Psoas muscle (tissue), 8 donors: ENCODE measurements at regions of chr16 and their contacts with region 1.

Region 1: DNA sequence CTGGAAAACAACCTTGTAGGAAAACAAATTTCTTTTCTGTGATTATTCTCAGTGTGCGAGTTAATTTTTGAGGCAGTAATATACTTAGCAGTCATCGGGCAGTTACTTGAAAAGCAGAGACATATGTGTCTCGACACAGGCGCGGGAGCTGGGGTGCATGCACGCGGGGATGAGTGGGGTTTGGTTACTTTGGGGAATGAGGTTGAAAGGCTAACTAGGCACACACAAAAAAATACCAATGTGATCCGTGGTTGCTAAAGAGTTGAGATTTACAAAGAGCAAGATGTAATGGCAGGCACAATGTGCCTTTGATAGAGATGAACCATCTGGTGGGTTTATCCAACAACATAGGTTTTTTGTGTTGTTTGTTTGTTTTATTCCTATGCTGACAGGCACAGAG is 703.8 kb upstream of the EEF2KMT start:
- DNase-seq: no peak
- ATAC-seq: no peak
- H3K4me3 ChIP-seq: no peak overlapping the region
- H3K27ac ChIP-seq: no peak overlapping the region
- H3K4me1 ChIP-seq: no peaks in the 10 kb centered on the region
- H3K27me3 ChIP-seq: peaks cover 0 to 2% (median 0%) of the 10 kb centered on the region in 3 donors
- CTCF ChIP-seq: no peak

Region 2: DNA sequence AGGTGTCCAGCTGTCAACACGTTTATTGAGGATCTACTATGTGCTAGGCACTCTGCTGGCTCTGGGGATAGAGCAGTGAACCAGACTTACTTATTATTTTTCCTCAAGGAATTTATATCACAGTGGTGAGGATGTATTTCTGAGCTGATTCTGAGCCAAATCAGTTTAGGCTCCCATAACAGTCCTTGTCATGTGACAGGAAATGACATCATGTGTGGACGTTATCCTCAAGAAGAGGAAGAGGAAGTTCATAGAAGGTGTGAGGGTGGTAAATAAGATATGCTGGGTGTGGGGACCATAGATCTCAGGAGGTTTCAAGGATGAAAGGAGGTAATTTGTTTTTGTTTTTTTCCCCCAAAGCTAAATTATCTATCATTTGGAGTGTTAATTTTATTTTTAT is 169.7 kb after region 1 on chr16:
- intact Hi-C with region 1: no loop called
- DNase-seq: no peak
- ATAC-seq: no peak
- H3K4me3 ChIP-seq: no peak overlapping the region
- H3K27ac ChIP-seq: no peak overlapping the region
- H3K4me1 ChIP-seq: no peaks in the 10 kb centered on the region
- H3K27me3 ChIP-seq: no peaks in the 10 kb centered on the region
- CTCF ChIP-seq: no peak

Region 3: DNA sequence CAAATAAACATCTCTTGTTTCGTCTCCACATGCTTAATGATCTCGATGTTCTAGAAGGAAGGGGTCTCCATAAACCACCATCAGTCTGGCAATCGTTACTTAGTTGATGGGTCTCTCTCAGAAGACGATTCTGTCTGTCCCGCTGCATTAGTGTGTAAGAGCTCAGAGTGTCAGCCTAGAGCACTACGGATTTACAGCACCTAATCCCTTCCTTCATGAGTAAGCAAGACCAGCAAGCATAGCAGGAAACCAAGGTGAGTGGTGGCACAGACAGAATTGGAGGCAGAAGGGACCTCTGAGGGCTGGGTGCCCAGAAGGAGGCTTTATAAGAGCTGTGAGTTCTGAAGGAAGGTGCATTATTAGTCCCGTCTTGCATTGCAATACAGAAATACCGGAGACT is 1971.3 kb after region 1 on chr16:
- intact Hi-C with region 1: loop called in 1 of 2 experiments (anchors 5 kb)
- DNase-seq: no peak
- ATAC-seq: no peak
- H3K4me3 ChIP-seq: no peak overlapping the region
- H3K27ac ChIP-seq: no peak overlapping the region
- H3K4me1 ChIP-seq: no peaks in the 10 kb centered on the region
- H3K27me3 ChIP-seq: no peaks in the 10 kb centered on the region
- CTCF ChIP-seq: no peak